ENCODE measurements at regions of chr6 and their contacts with region 1.

Region 1: DNA sequence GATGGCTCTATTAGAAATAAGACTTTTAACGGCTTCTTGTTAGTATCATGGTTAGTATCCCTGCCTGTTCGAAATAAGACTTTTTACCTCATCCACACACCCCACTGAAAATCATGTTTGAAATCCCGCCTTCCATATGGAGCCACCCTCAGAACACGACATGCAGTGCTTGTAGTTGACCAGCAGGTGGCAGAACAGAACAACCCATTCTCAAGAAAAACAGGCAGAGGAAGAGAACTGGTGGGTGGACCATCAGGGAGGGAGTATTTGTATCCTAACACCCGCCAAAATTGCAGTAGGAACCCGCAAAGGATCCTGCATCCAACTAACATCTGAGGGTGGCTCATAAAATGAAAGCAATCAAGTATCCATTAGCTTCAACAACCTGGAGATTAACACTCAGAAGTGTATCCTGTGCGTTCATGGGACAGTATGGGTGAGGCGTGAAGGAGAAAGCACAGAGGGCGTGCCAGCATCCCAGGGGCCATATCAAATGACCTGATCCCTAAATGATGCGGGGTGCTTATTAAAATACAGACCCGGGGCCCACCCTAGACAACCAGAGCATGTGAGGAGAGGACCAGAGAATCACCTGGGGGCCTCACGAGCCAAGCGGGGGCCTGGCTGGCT is 89.6 kb upstream of the NHSL1 start:
- DNase-seq: no peak
- ATAC-seq: peak; percentile 51

Region 2: GRCh38 chr6:138115877-138116660 is 472.9 kb before region 1 on chr6:
- intact Hi-C with region 1: loop called (anchors 5 kb)
- DNase-seq: peak; percentile 68
- ATAC-seq: peak; percentile 83

Region 3: GRCh38 chr6:138287144-138287955 is 301.6 kb before region 1 on chr6:
- intact Hi-C with region 1: loop called (anchors 5 kb)
- DNase-seq: no peak
- ATAC-seq: no peak

Region 4: GRCh38 chr6:138428944-138429598 is 159.8 kb before region 1 on chr6:
- intact Hi-C with region 1: loop called (anchors 2 kb)
- DNase-seq: no peak
- ATAC-seq: peak; percentile 30

Region 5: GRCh38 chr6:138692058-138692977 is 103.4 kb after region 1 on chr6:
- intact Hi-C with region 1: loop called (anchors 5 kb)
- DNase-seq: peak; percentile 90
- ATAC-seq: peak; percentile 83

Region 6: DNA sequence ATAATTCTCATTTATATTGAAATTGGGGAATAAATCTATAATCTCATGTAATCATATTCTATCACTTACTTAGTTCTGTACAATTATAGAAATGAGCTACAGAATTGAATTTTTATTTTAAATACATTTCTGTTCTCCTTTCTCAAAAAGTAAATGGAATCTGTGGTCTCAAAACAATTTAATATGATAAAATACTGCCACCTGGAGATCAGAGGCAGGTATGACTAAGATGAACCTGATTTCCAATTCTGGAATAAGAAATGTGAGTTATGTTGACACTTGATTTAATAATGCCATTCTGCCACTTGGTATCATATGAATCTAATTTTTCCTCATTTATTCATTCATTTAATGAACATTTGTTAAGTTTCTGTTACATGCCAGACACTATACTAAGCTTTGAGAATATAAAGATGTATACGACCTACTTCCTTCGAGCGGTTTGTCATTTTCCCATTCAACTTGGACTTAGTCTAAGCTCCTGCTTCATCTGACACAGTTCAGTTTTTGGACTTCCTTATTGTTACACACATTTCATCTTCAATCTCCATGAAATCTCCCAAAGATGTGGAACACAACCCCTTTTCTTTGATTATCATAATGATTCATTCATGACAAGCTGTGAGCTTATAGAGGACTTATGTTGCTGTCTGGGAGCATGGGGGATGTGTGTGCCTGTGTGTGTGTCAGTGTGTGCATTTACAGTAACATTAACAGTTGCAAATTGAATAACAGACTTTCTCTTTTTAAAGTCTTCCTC is 177.2 kb after region 1 on chr6:
- intact Hi-C with region 1: loop called (anchors 2 kb)
- DNase-seq: no peak
- ATAC-seq: no peak

Measured in Right ventricle myocardium inferior (tissue), 1 donor.